B cell (primary cell): ENCODE measurements at regions of chr2 and their contacts with region 1.

Region 1: DNA sequence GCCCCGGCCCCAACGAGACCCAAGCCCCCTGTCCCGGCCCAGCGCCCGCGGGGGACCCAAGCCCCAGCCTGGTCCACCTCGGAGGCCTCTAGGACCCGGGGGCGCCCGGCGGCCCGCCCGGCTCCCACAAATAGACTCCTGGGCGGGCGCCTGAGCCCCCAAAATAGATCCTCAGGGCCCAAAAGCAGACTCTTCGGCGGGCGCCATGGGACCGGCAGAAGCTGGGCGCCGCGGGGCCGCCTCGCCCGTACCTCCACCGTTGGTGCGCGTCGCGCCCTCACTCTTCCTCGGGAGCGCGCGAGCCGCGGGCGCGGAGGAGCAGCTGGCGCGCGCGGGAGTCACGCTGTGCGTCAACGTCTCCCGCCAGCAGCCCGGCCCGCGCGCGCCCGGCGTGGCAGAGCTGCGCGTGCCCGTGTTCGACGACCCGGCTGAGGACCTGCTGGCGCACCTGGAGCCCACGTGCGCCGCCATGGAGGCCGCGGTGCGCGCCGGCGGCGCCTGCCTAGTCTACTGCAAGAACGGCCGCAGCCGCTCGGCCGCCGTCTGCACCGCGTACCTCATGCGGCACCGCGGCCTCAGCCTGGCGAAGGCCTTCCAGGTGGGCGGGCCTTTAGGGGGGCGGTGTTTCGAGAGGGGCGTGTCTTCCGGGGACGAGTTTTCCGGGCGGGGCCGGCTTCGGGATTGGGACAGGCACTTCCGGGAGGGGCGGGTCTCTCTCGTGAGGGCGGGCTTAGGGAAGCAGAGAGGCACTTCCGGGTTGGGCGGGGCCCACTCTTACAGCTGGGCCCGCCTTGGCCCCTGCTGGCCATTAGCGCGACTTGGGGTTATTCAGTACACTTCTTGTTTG is 546 bp downstream of the DUSP28 start:
- DNase-seq: peak; percentile 99
- ATAC-seq: peak; percentile 67
- H3K4me3 ChIP-seq: peak overlapping the region; percentile 65 to 86 (median 74)
- H3K4me3 Mint-ChIP-seq: peak overlapping the region; percentile 81
- H3K27ac ChIP-seq: peak overlapping the region; percentile 89 to 98
- H3K27ac Mint-ChIP-seq: peak overlapping the region; percentile 96
- H3K4me1 ChIP-seq: peaks cover 52 to 66% of the 10 kb centered on the region in 2 donors
- H3K4me1 Mint-ChIP-seq: peaks cover 71% of the 10 kb centered on the region
- H3K27me3 ChIP-seq: no peaks in the 10 kb centered on the region
- H3K27me3 Mint-ChIP-seq: no peaks in the 10 kb centered on the region
- CTCF ChIP-seq: no peak

Region 2: DNA sequence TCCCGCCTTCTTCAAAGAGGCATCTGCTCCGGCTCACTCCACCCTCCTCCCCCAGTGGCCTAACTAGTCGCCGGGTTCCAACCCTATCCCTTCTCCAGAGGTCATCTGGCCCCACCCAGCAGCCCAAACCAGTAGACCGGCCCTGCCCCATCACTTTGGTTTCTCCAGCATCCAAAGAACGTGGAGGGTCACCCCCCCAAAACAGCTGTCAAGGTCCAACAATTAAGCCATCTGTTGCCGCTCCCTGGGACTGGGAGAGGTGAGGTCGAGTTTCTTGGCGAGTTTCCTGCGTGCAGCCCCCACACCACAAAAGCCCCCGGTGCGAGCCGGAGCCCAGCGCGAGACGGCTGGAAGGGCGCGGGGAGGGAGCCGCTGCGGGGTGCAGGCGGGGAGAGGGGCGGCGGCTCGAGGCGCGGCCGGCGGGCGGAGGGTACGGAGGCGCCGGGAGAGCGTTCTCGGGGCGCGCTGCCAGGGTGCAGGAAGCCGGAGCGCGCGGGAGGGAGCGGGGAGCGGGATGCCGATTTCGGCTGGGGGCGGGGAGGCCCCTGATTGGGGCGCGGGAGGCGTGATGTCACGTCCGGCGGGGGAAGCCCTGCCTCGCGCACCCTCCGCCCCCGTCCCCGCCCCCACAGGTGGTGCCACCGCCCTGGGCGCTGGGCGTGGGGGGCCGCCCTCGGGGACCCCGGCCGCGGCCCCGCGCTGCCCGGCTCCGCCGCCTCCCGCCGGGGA is 125.8 kb before region 1 on chr2:
- CTCF ChIA-PET with region 1: no interaction called
- POLR2A ChIA-PET with region 1: no interaction called
- intact Hi-C with region 1: loop called (anchors 2 kb)
- DNase-seq: peak; percentile 91
- ATAC-seq: peak; percentile 87
- H3K4me3 ChIP-seq: peak overlapping the region in 4 of 5 experiments; percentile 33 to 74 (median 54)
- H3K4me3 Mint-ChIP-seq: peak overlapping the region; percentile 87
- H3K27ac ChIP-seq: no peak overlapping the region
- H3K27ac Mint-ChIP-seq: peak overlapping the region; percentile 83
- H3K4me1 ChIP-seq: peaks cover 24 to 27% of the 10 kb centered on the region in 2 donors
- H3K4me1 Mint-ChIP-seq: peaks cover 10% of the 10 kb centered on the region
- H3K27me3 ChIP-seq: peaks cover 0 to 46% (median 13%) of the 10 kb centered on the region in 4 experiments
- H3K27me3 Mint-ChIP-seq: peaks cover 10% of the 10 kb centered on the region
- CTCF ChIP-seq: no peak

Region 3: GRCh38 chr2:240445691-240446377 is 114.9 kb before region 1 on chr2:
- CTCF ChIA-PET with region 1: no interaction called
- POLR2A ChIA-PET with region 1: no interaction called
- intact Hi-C with region 1: no loop called
- DNase-seq: no peak
- ATAC-seq: no peak
- H3K4me3 ChIP-seq: no peak overlapping the region
- H3K4me3 Mint-ChIP-seq: no peak overlapping the region
- H3K27ac ChIP-seq: no peak overlapping the region
- H3K27ac Mint-ChIP-seq: no peak overlapping the region
- H3K4me1 ChIP-seq: peaks cover 0 to 4% of the 10 kb centered on the region in 2 donors
- H3K4me1 Mint-ChIP-seq: peaks cover 13% of the 10 kb centered on the region
- H3K27me3 ChIP-seq: peaks cover 0 to 18% (median 2%) of the 10 kb centered on the region in 4 experiments
- H3K27me3 Mint-ChIP-seq: peaks cover 23% of the 10 kb centered on the region
- CTCF ChIP-seq: no peak

Region 4: GRCh38 chr2:240532031-240532775 is 28.5 kb before region 1 on chr2:
- CTCF ChIA-PET with region 1: no interaction called
- POLR2A ChIA-PET with region 1: no interaction called
- intact Hi-C with region 1: no loop called
- DNase-seq: no peak
- ATAC-seq: no peak
- H3K4me3 ChIP-seq: no peak overlapping the region
- H3K4me3 Mint-ChIP-seq: no peak overlapping the region
- H3K27ac ChIP-seq: no peak overlapping the region
- H3K27ac Mint-ChIP-seq: no peak overlapping the region
- H3K4me1 ChIP-seq: no peaks in the 10 kb centered on the region
- H3K4me1 Mint-ChIP-seq: no peaks in the 10 kb centered on the region
- H3K27me3 ChIP-seq: no peaks in the 10 kb centered on the region
- H3K27me3 Mint-ChIP-seq: no peaks in the 10 kb centered on the region
- CTCF ChIP-seq: no peak

Region 5: DNA sequence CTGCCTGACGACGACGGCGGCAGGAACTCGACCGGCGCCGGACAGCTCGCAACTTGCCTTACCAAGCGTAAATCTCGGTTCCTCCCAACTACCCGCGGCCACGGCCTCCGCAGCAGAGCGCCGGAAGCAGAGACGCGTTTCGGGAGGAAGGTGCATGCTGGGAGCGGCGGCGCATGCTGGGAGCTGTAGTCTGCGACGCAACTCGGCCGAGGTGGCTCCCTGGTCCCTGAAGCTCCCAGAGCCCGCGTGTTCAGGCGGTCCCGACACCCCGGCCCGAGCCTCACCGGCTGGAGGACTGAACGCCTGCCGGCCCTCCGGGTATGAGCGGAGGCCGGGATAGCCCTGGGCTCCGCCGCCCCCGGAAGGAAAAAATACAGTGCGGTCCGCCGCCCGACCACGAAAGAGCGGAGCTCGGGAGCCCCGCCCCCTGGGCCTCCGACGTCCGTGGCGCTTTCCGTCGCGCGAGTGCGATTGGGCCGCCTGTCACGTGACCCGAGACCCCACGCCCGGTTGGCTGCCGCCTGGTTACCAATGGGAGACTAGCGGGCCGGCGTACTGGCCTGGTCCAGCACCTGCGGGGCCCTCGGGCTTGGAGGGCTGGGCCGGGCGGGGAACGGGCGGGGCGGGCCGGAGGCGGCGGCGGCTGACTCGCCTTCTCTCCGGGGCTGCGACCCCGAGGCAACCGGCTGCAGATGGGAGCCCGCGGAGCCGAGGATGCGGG is 25.7 kb after region 1 on chr2 and contains the start of gene CAPN10:
- CTCF ChIA-PET with region 1: interaction called, 126 read pairs
- POLR2A ChIA-PET with region 1: interaction called, 97 read pairs
- intact Hi-C with region 1: loop called (anchors 1 kb)
- DNase-seq: peak; percentile 97
- ATAC-seq: peak; percentile 77
- H3K4me3 ChIP-seq: peak within 1 kb of the TSS; percentile 62 to 93 (median 89)
- H3K4me3 Mint-ChIP-seq: peak within 1 kb of the TSS; percentile 93
- H3K27ac ChIP-seq: peak within 1 kb of the TSS; percentile 95 to 97
- H3K27ac Mint-ChIP-seq: peak within 1 kb of the TSS; percentile 94
- H3K4me1 ChIP-seq: peaks cover 32 to 40% of the 10 kb centered on the region in 2 donors
- H3K4me1 Mint-ChIP-seq: peaks cover 54% of the 10 kb centered on the region
- H3K27me3 ChIP-seq: no peaks in the 10 kb centered on the region
- H3K27me3 Mint-ChIP-seq: no peaks in the 10 kb centered on the region
- CTCF ChIP-seq: no peak
- total RNA-seq, gene CAPN10: 73.4 and 88.9 TPM in 2 replicates

Region 6: DNA sequence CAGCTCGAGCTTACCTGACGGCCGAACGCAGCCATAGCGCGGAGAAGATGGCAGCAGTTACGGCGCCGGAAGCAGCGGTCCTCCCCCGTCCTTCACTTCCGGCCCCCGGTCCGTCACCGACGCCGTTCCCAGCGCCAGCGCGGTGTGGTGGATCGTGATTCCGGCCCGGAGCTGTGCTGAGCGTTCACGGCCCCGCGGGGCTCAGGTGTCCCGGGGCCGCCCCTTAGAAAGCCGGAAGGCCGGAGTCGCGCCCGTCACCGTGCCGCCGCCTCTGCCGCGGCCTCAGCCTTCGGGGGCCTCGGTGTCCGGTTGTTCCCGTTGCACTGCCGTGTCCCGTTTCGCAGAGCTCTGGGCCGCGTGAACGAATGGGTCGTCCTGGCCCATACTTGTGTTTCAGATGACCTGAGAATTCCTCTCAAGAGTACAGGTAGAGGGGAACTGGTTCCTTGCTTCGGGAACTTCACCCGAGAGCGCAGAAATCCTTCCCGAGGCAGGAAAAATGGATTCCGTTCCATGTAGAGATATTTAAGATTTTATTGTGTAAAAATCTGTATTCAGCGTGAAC is 541.6 kb after region 1 on chr2 and contains the start of gene MTERF4:
- CTCF ChIA-PET with region 1: no interaction called
- POLR2A ChIA-PET with region 1: no interaction called
- intact Hi-C with region 1: loop called (anchors 10 kb)
- DNase-seq: peak; percentile 93
- ATAC-seq: peak; percentile 91
- H3K4me3 ChIP-seq: peak within 1 kb of the TSS; percentile 73 to 95 (median 93)
- H3K4me3 Mint-ChIP-seq: peak within 1 kb of the TSS; percentile 98
- H3K27ac ChIP-seq: peak within 1 kb of the TSS; percentile 88 to 89
- H3K27ac Mint-ChIP-seq: peak within 1 kb of the TSS; percentile 97
- H3K4me1 ChIP-seq: peaks cover 43 to 56% of the 10 kb centered on the region in 2 donors
- H3K4me1 Mint-ChIP-seq: peaks cover 49% of the 10 kb centered on the region
- H3K27me3 ChIP-seq: no peaks in the 10 kb centered on the region
- H3K27me3 Mint-ChIP-seq: no peaks in the 10 kb centered on the region
- CTCF ChIP-seq: no peak
- total RNA-seq, gene MTERF4: 153 and 159 TPM in 2 replicates

Region 7: DNA sequence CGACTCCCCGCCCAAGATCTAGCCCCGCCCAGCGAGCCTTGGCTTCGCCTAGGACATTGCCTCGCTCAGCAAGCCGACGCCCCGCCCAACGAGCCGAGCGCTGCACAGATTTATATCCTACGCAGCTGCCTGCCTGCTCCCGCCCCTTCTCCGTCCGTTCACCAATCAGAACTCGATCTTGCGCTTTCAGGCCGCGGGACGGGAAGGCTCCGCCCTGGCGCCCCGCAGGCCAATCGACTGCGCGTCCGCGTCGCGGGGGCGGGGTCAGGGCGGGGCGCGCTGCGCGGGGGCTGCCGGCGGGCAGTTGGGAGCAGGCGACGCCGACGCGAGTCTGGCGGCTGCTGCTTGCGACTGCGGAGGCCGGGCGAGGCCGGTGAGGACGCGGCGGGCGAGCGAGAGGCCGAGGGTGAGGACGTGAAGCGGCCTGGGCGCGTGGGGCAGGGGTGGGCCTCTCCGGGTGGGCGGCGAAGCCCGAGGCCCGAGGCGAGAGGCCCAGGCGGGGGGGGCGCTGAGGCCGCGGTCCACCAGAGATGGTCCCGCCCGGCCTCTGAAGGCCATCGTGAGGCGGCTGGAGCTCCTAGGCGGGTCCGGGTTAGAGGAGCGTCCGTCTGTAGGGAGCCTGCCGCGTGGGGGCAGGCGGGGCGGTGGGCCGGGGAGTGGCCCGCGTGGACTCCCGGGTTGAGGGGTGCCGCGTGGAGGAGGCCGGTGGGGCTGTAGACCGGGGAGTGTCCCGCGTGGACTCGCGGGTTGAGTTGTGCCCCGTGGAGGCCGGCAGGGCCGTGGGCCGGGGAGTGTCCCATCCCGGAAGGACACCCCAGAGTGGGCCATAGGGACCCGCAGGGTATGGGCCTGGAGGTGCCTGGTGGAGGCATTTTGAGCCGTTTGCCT is 795.5 kb after region 1 on chr2 and contains the start of gene FARP2:
- CTCF ChIA-PET with region 1: no interaction called
- POLR2A ChIA-PET with region 1: no interaction called
- intact Hi-C with region 1: loop called (anchors 5 kb)
- DNase-seq: peak; percentile 99
- ATAC-seq: peak; percentile 87
- H3K4me3 ChIP-seq: peak within 1 kb of the TSS; percentile 51 to 80 (median 77)
- H3K4me3 Mint-ChIP-seq: peak within 1 kb of the TSS; percentile 90
- H3K27ac ChIP-seq: peak within 1 kb of the TSS; percentile 54 to 82
- H3K27ac Mint-ChIP-seq: peak within 1 kb of the TSS; percentile 96
- H3K4me1 ChIP-seq: peaks cover 33 to 38% of the 10 kb centered on the region in 2 donors
- H3K4me1 Mint-ChIP-seq: peaks cover 39% of the 10 kb centered on the region
- H3K27me3 ChIP-seq: no peaks in the 10 kb centered on the region
- H3K27me3 Mint-ChIP-seq: no peaks in the 10 kb centered on the region
- CTCF ChIP-seq: no peak
- total RNA-seq, gene FARP2: 114 and 151 TPM in 2 replicates

Region 8: GRCh38 chr2:241637000-241637791 is 1076.5 kb after region 1 on chr2 and contains the starts of genes ATG4B and THAP4:
- CTCF ChIA-PET with region 1: no interaction called
- POLR2A ChIA-PET with region 1: no interaction called
- intact Hi-C with region 1: loop called (anchors 2 kb)
- DNase-seq: peak; percentile 93
- ATAC-seq: peak; percentile 71
- H3K4me3 ChIP-seq: peak within 1 kb of the TSS; percentile 76 to 97 (median 95)
- H3K4me3 Mint-ChIP-seq: peak within 1 kb of the TSS; percentile 84
- H3K27ac ChIP-seq: peak within 1 kb of the TSS; percentile 90 to 95
- H3K27ac Mint-ChIP-seq: peak within 1 kb of the TSS; percentile 96
- H3K4me1 ChIP-seq: peaks cover 19 to 24% of the 10 kb centered on the region in 2 donors
- H3K4me1 Mint-ChIP-seq: peaks cover 45% of the 10 kb centered on the region
- H3K27me3 ChIP-seq: no peaks in the 10 kb centered on the region
- H3K27me3 Mint-ChIP-seq: no peaks in the 10 kb centered on the region
- CTCF ChIP-seq: no peak
- total RNA-seq, gene ATG4B: 130 and 145 TPM in 2 replicates
- total RNA-seq, gene THAP4: 26.5 and 29.9 TPM in 2 replicates